ENCODE measurements at regions of chr2 and their contacts with region 1.

Region 1: GRCh38 chr2:204000446-204000845 is 63.9 kb downstream of the ICOS start:
- DNase-seq: peak in 4 of 5 donors; percentile 32 to 57 (median 48)
- H3K4me3 ChIP-seq: no peak overlapping the region
- H3K4me3 Mint-ChIP-seq: peak overlapping the region; percentile 26 to 78 (median 74)
- H3K27ac ChIP-seq: peak overlapping the region; percentile 11
- H3K27ac Mint-ChIP-seq: peak overlapping the region; percentile 20 to 91 (median 81)
- H3K4me1 ChIP-seq: peaks cover 92% of the 10 kb centered on the region
- H3K4me1 Mint-ChIP-seq: peaks cover 79 to 91% (median 85%) of the 10 kb centered on the region in 4 donors
- H3K27me3 ChIP-seq: no peaks in the 10 kb centered on the region
- H3K27me3 Mint-ChIP-seq: no peaks in the 10 kb centered on the region

Region 2: DNA sequence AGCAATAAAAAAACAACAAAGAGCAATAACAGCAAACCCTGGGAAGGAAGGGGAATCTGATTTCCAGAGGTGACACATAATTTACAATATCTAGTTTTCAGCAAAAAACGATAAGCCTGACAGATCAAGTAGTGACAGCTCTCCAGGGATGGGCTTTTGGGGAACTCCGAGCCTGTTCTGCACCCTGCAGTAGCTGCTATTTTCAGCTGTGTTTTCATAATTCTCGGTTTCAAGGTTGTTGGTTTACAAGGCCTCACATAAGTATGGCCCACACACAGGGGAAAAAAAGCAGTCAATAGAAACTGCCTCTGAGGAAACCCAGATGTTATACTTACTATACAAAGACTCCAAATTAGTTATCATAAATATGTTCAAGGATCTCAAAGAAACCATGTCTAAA is 200.5 kb before region 1 on chr2:
- CTCF ChIA-PET with region 1: no interaction called
- POLR2A ChIA-PET with region 1: no interaction called
- intact Hi-C with region 1: no loop called
- DNase-seq: no peak
- H3K4me3 ChIP-seq: no peak overlapping the region
- H3K4me3 Mint-ChIP-seq: no peak overlapping the region
- H3K27ac ChIP-seq: no peak overlapping the region
- H3K27ac Mint-ChIP-seq: peak overlapping the region in 5 of 7 donors; percentile 43 to 77 (median 46)
- H3K4me1 ChIP-seq: peaks cover 27% of the 10 kb centered on the region
- H3K4me1 Mint-ChIP-seq: peaks cover 39 to 44% (median 42%) of the 10 kb centered on the region in 4 donors
- H3K27me3 ChIP-seq: no peaks in the 10 kb centered on the region
- H3K27me3 Mint-ChIP-seq: no peaks in the 10 kb centered on the region

Region 3: DNA sequence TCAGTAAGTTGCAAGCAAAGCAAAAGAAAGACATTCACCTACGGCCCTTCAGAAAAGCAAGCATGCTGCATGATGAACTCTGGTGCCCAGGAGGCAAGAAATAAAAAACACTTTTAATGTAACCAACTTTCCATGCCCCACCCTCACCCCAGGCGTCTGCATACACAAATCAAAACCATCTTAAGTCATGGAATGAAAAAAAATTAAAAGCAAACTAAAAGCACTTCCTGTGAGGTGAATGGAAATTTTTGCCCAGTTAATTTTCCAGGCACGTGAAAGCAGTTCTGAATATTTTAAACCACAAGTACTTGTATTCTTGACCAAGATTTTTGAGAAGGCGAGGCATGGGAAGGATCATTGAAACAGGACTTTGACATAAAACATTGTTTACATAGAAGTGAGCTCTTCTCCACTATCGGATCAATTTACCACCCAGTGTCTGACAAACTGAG is 66.4 kb before region 1 on chr2:
- CTCF ChIA-PET with region 1: interaction called, 5 read pairs
- POLR2A ChIA-PET with region 1: interaction called, 9 read pairs
- intact Hi-C with region 1: loop called (anchors 5 kb)
- DNase-seq: peak in 4 of 5 donors; percentile 40 to 81 (median 58)
- H3K4me3 ChIP-seq: peak overlapping the region; percentile 2 to 41
- H3K4me3 Mint-ChIP-seq: peak overlapping the region; percentile 62 to 91 (median 76)
- H3K27ac ChIP-seq: peak overlapping the region; percentile 53
- H3K27ac Mint-ChIP-seq: peak overlapping the region; percentile 92 to 98 (median 96)
- H3K4me1 ChIP-seq: peaks cover 45% of the 10 kb centered on the region
- H3K4me1 Mint-ChIP-seq: peaks cover 39 to 84% (median 54%) of the 10 kb centered on the region in 4 donors
- H3K27me3 ChIP-seq: no peaks in the 10 kb centered on the region
- H3K27me3 Mint-ChIP-seq: no peaks in the 10 kb centered on the region

Region 4: GRCh38 chr2:204060841-204061240 is 60.4 kb after region 1 on chr2:
- CTCF ChIA-PET with region 1: no interaction called
- POLR2A ChIA-PET with region 1: no interaction called
- intact Hi-C with region 1: no loop called
- DNase-seq: no peak
- H3K4me3 ChIP-seq: no peak overlapping the region
- H3K4me3 Mint-ChIP-seq: no peak overlapping the region
- H3K27ac ChIP-seq: no peak overlapping the region
- H3K27ac Mint-ChIP-seq: no peak overlapping the region
- H3K4me1 ChIP-seq: no peaks in the 10 kb centered on the region
- H3K4me1 Mint-ChIP-seq: peaks cover 0 to 2% (median under 1%) of the 10 kb centered on the region in 4 donors
- H3K27me3 ChIP-seq: no peaks in the 10 kb centered on the region
- H3K27me3 Mint-ChIP-seq: peaks cover 0 to 2% of the 10 kb centered on the region in 2 donors

Region 5: DNA sequence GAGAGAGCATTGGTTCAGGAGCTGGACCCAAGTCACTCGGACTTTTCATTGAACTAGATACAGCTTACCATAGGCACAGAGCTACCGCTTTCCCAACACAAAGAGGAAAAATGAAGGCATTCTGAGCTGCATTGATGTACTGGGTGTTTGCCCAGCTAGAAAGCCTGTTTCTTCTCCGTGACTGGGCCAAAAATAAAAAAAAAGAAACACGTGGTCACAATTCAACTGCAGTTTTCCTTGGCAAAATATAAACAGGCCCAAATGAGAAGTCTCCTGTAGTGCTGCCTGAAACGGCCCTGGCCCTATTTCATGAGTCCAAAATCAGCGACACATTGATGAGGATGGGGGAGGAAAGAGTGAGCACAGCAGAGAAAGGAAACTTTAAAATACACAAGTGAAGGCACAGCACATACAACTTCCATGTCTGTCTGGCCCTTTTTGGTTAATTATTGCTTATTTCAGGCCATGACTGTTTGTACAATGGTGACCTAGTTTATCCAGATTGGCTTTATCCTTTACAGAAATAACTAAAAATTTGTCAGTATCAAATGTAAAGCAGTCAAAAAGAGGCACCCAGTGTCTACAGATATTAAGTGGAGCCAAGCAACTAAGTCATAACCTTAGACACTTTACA is 115.8 kb after region 1 on chr2:
- CTCF ChIA-PET with region 1: no interaction called
- POLR2A ChIA-PET with region 1: no interaction called
- intact Hi-C with region 1: no loop called
- DNase-seq: no peak
- H3K4me3 ChIP-seq: no peak overlapping the region
- H3K4me3 Mint-ChIP-seq: no peak overlapping the region
- H3K27ac ChIP-seq: no peak overlapping the region
- H3K27ac Mint-ChIP-seq: no peak overlapping the region
- H3K4me1 ChIP-seq: peaks cover 19% of the 10 kb centered on the region
- H3K4me1 Mint-ChIP-seq: peaks cover 17 to 36% (median 22%) of the 10 kb centered on the region in 4 donors
- H3K27me3 ChIP-seq: no peaks in the 10 kb centered on the region
- H3K27me3 Mint-ChIP-seq: no peaks in the 10 kb centered on the region